ENCODE measurements at regions of chr16 and their contacts with region 1.

Region 1: DNA sequence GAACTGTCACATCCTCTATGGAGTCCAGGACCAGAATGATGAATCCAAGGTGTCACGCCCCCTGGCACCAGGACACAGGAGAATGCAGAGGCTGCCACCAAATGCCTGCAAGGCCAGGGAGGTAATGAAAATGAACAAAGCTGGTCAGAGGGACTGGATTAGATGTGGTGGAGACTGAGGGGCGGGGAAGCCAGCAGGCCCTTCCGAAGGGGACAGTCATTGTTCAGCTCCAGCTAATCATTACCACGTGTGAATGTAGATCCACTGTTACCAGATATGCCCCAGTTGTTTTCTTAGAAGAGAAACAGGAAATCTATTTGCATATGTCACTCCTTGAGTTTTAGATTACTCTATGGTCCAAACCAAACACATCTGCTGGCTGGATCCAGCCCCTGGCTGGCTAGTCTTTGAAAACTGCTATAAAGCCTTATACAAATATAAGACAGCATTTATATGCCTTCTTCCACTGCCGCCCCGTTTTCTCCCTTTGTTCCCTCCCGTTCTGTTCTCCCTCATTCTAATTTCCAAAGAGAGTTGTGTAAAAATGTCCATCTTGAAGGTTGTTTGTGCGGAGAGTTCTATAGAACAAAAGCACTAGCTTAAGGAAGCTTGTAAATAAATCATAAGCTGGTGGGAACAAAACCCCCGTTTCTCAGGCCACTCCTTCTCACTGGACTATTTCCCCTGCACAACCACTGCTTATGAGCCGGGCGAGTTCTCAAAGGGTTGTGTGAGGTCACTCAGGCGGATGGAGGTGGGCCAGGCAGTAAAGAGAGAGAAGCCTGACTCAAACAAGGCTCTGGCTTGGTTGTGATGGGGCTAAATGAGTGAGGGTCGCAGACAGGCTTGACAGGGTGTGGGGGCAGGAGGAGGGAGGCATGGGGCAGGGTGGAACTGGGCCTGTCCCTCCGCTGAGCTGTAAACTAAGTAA is 14.2 kb downstream of the CRYM start:
- DNase-seq: no peak

Region 2: GRCh38 chr16:21194771-21195301 is 69.1 kb before region 1 on chr16:
- intact Hi-C with region 1: no loop called
- DNase-seq: no peak

Region 3: GRCh38 chr16:21222495-21223337 is 41.2 kb before region 1 on chr16:
- intact Hi-C with region 1: no loop called
- DNase-seq: no peak

Region 4: DNA sequence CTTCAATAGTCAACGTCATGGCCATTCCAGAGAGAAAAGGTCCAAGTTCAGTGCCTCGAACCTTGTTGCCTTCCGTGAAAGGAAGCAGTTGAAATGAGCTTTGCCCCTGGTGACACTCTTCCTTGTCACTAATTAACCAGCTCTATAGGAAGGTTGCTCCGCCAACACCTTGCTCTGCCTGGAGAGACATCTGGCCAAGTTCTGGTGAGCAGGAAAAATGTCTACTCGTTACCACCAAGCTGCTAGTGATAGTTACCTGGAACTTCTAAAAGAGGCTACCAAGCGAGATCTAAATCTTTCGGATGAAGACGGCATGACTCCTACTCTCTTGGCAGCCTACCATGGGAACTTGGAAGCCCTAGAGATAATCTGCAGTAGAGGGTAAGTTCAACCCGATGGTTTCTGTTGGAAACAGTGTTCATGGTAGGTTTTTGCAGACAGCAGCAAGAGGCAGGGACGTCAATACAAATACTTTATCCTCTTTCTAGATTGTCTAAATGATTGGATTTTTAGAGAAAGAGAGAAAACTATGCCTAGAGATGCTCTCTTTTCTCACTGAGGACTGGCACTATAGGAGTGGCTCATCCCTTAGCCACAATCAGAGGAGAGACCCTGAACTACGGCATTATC is 30.3 kb before region 1 on chr16 and contains the start of gene ANKS4B:
- intact Hi-C with region 1: no loop called
- DNase-seq: no peak
- total RNA-seq, gene ANKS4B: not detected

Region 5: DNA sequence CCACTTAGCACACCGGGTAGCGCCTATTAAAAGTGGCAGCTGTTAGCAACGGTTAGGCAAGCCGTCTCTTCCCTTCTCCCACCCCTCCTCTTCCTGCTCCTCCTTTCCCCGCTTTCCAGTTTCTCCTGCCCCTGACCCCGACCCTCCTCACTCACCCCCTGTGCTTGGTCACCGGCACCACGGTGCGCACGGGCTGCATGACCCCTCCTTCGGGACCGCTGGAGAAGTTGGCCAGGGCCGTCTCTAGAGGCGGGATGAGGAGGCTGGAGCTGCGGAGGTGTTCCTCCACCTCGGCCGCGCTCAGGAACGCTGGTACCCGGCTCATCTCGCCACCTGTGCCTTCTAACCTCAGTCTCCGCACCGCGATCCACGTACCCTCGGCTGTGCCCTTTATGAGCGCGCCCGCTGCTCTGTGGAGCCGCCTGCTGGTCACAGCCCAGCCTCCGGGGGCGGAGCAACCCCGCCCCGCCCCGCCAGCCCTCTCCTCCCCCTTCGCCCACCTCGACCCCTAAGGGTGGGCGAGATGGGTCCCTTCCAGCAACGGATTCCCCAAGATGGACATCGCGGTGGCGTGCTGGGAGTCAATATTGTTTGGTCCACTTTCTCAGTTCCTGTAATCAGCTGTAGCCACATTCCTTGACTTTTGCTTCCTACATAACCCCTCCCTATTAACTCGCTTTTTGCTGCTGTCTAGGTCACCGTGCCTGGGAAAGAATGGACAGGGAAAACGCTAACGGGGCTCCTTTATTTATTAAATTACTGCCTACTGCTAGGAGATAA is 14.2 kb after region 1 on chr16 and contains the start of gene CRYM:
- intact Hi-C with region 1: loop called (anchors 2 kb)
- DNase-seq: peak; percentile 84
- total RNA-seq, gene CRYM: 105 TPM

Region 6: DNA sequence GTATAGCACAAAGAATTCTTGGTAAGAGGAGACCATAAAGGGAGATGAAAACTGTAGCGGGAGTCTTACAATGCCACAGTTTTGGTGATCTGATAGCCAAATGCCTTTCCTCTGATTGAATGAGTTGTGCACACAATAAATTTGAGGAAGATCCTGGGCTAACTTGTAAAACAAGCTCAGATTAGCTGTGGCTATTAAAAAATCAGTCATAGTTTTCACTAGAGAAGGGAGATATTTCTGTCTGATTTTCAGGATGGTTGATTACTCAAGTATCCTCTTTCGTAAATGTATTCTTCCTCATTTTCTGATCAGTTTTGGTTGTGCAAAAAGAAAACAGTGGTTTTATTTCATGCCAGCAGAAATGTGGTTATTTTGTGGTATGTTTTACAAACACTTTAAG is 326.4 kb after region 1 on chr16:
- intact Hi-C with region 1: no loop called
- DNase-seq: no peak